Heart left ventricle (tissue), 16 donors: ENCODE measurements at regions of chr20 and their contacts with region 1.

Region 1: GRCh38 chr20:55320817-55321216 is 684.5 kb downstream of the CBLN4 start:
- DNase-seq: no peak
- ATAC-seq: no peak
- H3K4me3 ChIP-seq: no peak overlapping the region
- H3K27ac ChIP-seq: no peak overlapping the region
- H3K4me1 ChIP-seq: no peaks in the 10 kb centered on the region
- H3K27me3 ChIP-seq: no peaks in the 10 kb centered on the region
- CTCF ChIP-seq: no peak
- POLR2A ChIP-seq: no peak

Region 2: DNA sequence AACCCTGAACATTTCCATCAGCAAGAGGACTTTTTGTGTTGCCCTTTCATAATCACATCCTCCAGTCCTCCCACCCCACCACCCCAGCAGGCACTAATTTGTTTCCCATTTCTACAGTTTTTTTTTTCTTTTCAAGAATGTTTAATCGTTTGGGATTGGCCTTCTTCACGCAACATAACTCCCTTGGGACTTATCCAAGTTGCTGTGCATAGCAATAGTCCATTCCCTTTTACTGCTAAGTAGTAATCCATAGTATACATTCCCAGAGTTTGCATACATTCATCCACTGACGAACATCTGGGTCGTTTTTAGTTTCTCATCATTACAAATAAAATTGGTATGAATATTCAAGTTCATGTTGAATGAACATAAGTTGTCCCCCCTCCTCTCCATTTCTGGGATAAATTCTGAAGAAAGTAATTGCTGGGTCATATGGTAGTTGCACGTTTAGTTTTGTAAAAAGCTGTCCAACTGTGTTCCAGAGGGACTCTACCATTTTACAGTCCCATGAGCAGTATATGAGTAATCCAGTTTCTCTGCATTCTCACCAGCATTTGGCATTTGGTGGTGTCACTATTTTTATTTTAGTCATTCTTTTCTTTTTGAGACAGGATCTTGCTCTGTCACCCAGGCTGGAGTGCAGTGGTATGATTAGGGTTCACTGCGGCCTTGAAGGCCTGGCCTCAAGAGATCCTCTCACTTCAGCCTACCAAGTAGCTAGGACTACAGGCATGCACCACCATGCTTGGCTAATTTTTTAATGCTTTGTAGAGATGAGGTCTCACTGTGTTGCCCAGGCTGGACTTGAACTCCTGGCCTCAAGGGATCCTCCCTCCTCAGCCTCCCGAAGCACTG is 754.6 kb before region 1 on chr20:
- intact Hi-C with region 1: no loop called
- DNase-seq: no peak
- ATAC-seq: no peak
- H3K4me3 ChIP-seq: no peak overlapping the region
- H3K27ac ChIP-seq: no peak overlapping the region
- H3K4me1 ChIP-seq: peaks cover 0 to 13% (median 0%) of the 10 kb centered on the region in 12 donors
- H3K27me3 ChIP-seq: no peaks in the 10 kb centered on the region
- CTCF ChIP-seq: no peak
- POLR2A ChIP-seq: no peak

Region 3: DNA sequence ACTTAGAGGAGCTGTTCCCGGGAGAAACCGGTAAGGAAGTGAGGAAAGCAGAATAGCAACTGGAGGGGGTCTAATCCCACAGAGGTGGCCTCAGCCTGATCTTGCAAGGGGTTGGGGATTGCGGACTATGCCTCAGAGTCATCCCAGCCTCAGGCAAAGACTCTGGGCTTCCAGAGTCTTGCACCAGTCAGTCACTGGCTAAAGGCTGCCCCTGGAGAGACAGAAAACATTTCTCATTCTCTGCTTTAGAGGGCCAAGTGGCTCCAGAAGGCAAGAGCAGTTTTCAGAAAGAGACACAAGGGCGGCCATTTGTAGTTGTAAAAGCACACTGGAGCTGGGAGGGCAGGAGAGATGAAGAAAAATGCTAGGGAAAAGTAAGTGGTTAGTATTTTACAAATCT is 516.2 kb before region 1 on chr20:
- intact Hi-C with region 1: loop called in 1 of 10 experiments (anchors 5 kb)
- DNase-seq: no peak
- ATAC-seq: no peak
- H3K4me3 ChIP-seq: no peak overlapping the region
- H3K27ac ChIP-seq: no peak overlapping the region
- H3K4me1 ChIP-seq: no peaks in the 10 kb centered on the region
- H3K27me3 ChIP-seq: no peaks in the 10 kb centered on the region
- CTCF ChIP-seq: no peak
- POLR2A ChIP-seq: no peak

Region 4: DNA sequence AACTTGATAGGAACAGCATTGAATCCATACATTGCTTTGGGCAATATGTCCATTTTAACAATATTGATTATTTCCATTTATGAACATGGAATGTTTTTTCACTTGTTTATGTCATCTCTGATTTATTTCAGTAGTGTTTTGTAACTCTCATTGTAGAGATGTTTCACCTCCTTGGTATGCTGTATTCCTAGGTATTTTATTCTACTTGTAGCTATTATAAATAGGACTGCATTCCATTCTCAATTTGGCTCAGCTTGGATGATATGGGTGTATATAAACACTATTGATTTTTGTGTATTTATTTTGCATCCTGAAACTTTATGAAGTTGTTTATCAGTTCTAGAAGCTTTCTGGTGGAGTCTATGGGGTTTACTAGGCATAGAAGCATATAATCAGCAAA is 115.1 kb before region 1 on chr20:
- intact Hi-C with region 1: no loop called
- DNase-seq: no peak
- ATAC-seq: no peak
- H3K4me3 ChIP-seq: no peak overlapping the region
- H3K27ac ChIP-seq: no peak overlapping the region
- H3K4me1 ChIP-seq: no peaks in the 10 kb centered on the region
- H3K27me3 ChIP-seq: no peaks in the 10 kb centered on the region
- CTCF ChIP-seq: no peak
- POLR2A ChIP-seq: no peak